ENCODE measurements at regions of chr7 and their contacts with region 1.

Region 1: DNA sequence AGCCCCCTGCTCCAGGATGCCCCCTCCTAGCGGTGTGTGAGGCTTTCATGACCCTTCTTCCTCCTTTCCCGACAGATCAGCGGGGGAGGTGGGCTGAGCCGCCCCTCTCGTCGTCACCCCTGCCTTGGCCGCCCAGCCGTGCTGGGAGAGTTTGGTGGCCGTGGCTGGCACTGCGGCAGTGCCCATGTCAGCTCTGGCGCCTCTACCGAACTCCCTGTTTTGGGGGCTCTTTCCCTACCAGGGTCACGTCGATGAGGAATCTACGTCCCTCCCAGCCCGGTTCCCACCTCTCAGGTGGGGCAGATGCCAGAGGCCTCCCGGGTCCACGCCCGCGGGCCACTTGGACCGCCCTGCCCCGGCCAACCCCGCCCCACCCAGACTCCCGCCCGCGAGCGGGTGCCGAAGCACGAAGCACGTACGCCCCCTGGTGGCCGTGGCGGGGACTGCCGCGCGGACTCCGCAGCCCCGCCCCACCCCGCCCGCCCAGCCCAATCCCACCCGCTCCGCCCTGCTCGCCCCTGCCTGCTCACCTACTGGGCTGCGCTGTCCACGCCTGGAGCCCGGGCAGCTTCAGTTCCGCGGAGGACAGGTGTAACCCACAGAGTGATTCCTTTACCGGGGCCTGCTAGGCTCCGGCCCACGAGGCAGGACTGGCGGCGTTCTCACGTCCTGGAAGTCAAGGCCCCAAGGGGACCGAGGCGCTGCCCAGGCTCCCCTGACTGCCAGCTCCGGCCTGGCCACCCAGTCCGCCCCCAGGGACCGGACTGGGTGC is 127.1 kb downstream of the UBE2H start:
- DNase-seq: peak; percentile 85 to 94 (median 93)
- H3K4me3 ChIP-seq: peak overlapping the region; percentile 66
- H3K27ac ChIP-seq: no peak overlapping the region
- H3K4me1 ChIP-seq: peaks cover 5% of the 10 kb centered on the region
- H3K27me3 ChIP-seq: no peaks in the 10 kb centered on the region
- CTCF ChIP-seq: peak; percentile 49 to 95 (median 52)
- EP300 ChIP-seq: no peak
- POLR2A ChIP-seq: no peak

Region 2: GRCh38 chr7:129376076-129376777 is 449.5 kb before region 1 on chr7:
- intact Hi-C with region 1: loop called in 1 of 4 experiments (anchors 10 kb)
- DNase-seq: no peak
- H3K4me3 ChIP-seq: no peak overlapping the region
- H3K27ac ChIP-seq: no peak overlapping the region
- H3K4me1 ChIP-seq: no peaks in the 10 kb centered on the region
- H3K27me3 ChIP-seq: no peaks in the 10 kb centered on the region
- CTCF ChIP-seq: no peak
- EP300 ChIP-seq: no peak
- POLR2A ChIP-seq: no peak

Region 3: DNA sequence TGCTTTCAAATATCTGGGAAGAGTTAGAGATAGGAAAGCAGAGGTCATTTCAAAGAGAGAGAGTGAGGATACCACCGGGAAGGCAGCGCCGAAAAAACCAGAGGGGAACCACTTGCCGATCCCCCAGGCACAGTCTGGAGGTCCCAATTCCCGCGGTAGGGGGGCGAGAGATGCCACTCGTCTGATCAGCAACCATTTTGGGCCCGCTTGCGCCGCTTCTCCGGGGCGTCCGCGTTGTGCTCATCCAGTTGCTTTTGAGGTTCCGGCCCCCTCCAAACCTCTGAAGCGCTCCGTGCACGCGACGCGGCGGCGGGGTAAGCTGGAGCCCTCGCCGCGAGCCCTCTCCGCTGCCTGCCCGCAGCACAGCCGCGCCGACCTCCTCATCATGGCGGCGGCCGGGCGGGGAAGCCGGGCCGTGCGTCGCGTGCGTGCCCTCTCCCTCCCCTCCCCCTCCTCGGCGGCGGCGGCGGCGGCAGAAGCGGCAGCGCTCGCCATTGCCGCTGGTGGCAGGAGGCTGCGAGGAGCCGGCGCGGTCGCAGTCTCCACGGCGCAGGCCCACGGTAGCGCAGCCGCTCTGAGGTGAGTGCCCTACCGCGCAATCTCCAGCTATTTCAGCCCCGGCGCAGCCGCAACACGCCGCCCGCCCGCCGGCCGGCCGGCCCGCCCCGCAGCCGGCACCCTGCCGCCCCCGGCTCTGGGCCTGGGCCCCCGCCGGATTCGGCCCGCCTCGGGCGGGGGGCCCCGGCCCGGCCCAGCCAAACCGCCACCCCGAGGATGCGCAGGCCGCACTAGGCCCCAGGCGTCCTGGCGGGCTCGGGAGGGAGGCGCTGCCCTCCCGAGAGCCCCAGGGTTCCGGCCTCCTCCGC is 214.2 kb before region 1 on chr7 and contains the start of gene NRF1:
- intact Hi-C with region 1: loop called in 1 of 4 experiments (anchors 10 kb)
- DNase-seq: peak; percentile 83 to 93 (median 89)
- H3K4me3 ChIP-seq: peak within 1 kb of the TSS; percentile 88
- H3K27ac ChIP-seq: peak within 1 kb of the TSS; percentile 78 to 85
- H3K4me1 ChIP-seq: peaks cover 12% of the 10 kb centered on the region
- H3K27me3 ChIP-seq: no peaks in the 10 kb centered on the region
- CTCF ChIP-seq: peak in 1 of 3 donors; percentile 42
- EP300 ChIP-seq: no peak
- POLR2A ChIP-seq: peak; percentile 68
- total RNA-seq, gene NRF1: 11.5 to 33.5 (median 26.0) TPM

Region 4: GRCh38 chr7:129952653-129953560 is 127.2 kb after region 1 on chr7 and contains the start of gene UBE2H:
- intact Hi-C with region 1: loop called in 1 of 4 experiments (anchors 2 kb)
- DNase-seq: peak; percentile 90 to 97 (median 95)
- H3K4me3 ChIP-seq: peak within 1 kb of the TSS; percentile 79
- H3K27ac ChIP-seq: peak within 1 kb of the TSS; percentile 89 to 97
- H3K4me1 ChIP-seq: peaks cover 4% of the 10 kb centered on the region
- H3K27me3 ChIP-seq: no peaks in the 10 kb centered on the region
- CTCF ChIP-seq: peak in 2 of 3 donors; percentile 36 to 47
- EP300 ChIP-seq: no peak
- POLR2A ChIP-seq: peak; percentile 97
- total RNA-seq, gene UBE2H: 57.7 to 101 (median 64.7) TPM

Region 5: DNA sequence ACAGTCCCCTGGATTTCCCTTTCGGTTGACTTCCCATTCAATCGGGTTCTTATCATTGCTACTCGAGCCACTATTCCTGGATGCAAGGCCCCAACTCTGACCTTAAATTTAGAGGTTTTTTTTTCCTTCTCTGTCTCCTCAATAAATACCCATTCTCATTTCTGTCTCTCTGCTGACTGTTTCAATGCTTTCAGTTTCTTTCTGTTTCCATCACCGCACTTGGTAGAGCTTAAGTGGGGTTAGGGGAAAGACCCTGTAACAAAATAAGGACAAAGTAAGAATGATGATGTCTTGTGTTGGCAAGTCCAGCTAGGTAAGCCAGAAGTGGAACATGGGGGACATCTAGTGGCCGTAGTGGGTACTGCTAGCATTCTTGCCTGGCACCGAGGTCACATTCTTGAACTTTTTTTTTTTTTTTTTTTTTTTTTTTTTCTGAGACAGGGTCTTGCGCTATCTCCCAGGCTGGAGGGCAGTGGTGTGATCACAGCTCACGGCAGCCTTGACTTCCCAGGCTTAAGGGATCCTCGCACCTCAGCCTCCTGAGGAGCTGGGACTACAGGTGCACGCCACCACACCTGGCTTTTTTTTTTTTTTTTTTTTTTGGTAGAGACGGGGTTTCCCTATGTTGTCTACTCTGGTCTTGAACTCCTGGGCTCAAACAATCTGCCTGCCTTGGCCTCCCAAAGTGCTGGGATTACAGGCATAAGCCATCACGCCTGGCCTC is 185.2 kb after region 1 on chr7:
- intact Hi-C with region 1: loop called in 2 of 4 experiments (anchors 2 to 10 kb)
- DNase-seq: peak; percentile 73 to 89 (median 88)
- H3K4me3 ChIP-seq: no peak overlapping the region
- H3K27ac ChIP-seq: no peak overlapping the region
- H3K4me1 ChIP-seq: peaks cover 1% of the 10 kb centered on the region
- H3K27me3 ChIP-seq: no peaks in the 10 kb centered on the region
- CTCF ChIP-seq: peak; percentile 69 to 91 (median 78)
- EP300 ChIP-seq: no peak
- POLR2A ChIP-seq: no peak